ENCODE measurements at regions of chr15 and their contacts with region 1.

Region 1: GRCh38 chr15:84035399-84035766 is 200.2 kb upstream of the GOLGA6L4 start:
- H3K4me3 ChIP-seq: no peak overlapping the region
- H3K27ac ChIP-seq: no peak overlapping the region
- H3K4me1 ChIP-seq: peaks cover 7% of the 10 kb centered on the region; the same call in 1 of the 2 replicates
- CTCF ChIP-seq: no peak

Region 2: GRCh38 chr15:83559310-83559966 is 475.9 kb before region 1 on chr15:
- CTCF ChIA-PET with region 1: interaction called, 11 read pairs
- POLR2A ChIA-PET with region 1: no interaction called
- H3K4me3 ChIP-seq: no peak overlapping the region
- H3K27ac ChIP-seq: no peak overlapping the region
- H3K4me1 ChIP-seq: no peaks in the 10 kb centered on the region
- CTCF ChIP-seq: peak; percentile 69; the same call in 1 of the 2 replicates

Region 3: DNA sequence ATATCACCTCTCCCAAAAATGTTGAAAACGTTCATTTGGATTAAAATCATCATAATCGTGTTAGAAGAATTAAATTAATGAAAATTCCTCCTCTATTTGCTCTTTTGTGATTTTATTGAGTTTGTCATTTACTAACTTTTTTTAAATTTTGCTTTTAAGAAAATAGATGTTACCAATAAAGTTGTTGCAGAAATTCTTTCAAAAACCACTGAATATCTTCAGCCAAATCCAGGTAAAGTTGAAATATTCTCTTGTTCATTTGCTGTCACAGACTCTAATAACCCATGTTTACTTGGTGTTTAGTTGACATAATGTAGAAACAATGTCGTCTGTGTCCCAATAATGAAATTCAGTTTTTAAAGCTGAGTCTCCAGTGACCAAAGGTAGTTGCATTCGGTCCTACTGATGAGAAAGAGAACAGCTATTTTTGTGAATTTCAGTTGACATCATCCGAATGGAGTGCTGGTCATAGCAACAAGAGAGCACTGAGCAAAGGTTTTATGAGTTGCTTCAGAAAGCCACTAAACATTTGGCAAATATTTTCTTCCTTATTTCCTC is 470.3 kb before region 1 on chr15:
- CTCF ChIA-PET with region 1: interaction called, 14 read pairs
- POLR2A ChIA-PET with region 1: no interaction called
- H3K4me3 ChIP-seq: no peak overlapping the region
- H3K27ac ChIP-seq: no peak overlapping the region
- H3K4me1 ChIP-seq: no peaks in the 10 kb centered on the region
- CTCF ChIP-seq: no peak

Region 4: DNA sequence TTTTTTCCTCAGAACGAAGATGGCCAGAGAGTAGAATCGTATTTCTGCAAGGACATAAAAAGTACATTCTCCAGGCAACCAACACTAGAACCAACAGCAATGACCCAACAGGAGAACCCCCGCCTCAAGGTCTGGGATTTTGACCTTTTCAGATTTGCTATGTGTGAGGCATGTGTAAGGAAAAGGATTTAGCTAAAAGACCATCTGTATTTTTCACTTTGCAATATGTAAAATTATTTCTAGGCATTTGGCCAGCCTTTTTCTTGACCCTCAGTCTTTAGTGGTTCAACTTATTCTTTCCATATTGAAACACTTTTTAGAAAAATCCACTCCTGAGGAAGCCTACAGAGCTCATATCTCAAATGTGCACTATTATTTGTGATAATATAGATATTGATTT is 19.0 kb before region 1 on chr15:
- CTCF ChIA-PET with region 1: interaction called, 15 read pairs
- POLR2A ChIA-PET with region 1: no interaction called
- H3K4me3 ChIP-seq: no peak overlapping the region
- H3K27ac ChIP-seq: no peak overlapping the region
- H3K4me1 ChIP-seq: no peaks in the 10 kb centered on the region
- CTCF ChIP-seq: no peak

Region 5: DNA sequence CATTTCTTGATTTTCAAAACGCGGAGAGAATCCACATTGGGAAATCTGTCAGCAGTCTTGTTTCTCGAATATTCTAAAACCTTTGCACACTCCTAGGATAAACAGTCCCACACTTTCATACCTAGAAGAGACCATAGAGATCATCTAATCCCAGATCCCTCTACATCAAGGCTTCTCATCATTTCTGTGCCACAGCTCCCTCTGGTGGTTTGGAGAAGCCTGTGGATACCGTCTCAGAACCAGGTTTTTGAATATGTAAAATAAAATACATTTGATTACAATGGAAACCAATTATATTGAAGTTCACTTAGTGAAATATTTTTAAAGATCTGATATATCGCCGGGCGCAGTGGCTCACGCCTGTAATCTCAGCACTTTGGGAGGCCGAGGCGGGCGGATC is 11.7 kb before region 1 on chr15:
- CTCF ChIA-PET with region 1: interaction called, 38 read pairs
- POLR2A ChIA-PET with region 1: no interaction called
- H3K4me3 ChIP-seq: no peak overlapping the region
- H3K27ac ChIP-seq: no peak overlapping the region
- H3K4me1 ChIP-seq: no peaks in the 10 kb centered on the region
- CTCF ChIP-seq: no peak

Region 6: GRCh38 chr15:84046064-84046637 is 10.8 kb after region 1 on chr15:
- CTCF ChIA-PET with region 1: interaction called, 12 read pairs
- POLR2A ChIA-PET with region 1: no interaction called
- H3K4me3 ChIP-seq: no peak overlapping the region
- H3K27ac ChIP-seq: no peak overlapping the region
- H3K4me1 ChIP-seq: no peaks in the 10 kb centered on the region
- CTCF ChIP-seq: no peak

Measured in HEK293 (cell line).